Activated B cell treated with CpG ODN at 0.5 μM for 24 hours (primary cell): ENCODE measurements at regions of chr4 and their contacts with region 1.

Region 1: GRCh38 chr4:112938461-112939058 is 110.9 kb upstream of the ANK2 start:
- DNase-seq: no peak
- ATAC-seq: no peak
- H3K4me3 Mint-ChIP-seq: no peak overlapping the region
- H3K27ac Mint-ChIP-seq: no peak overlapping the region
- H3K4me1 Mint-ChIP-seq: no peaks in the 10 kb centered on the region
- H3K27me3 Mint-ChIP-seq: peaks cover 4% of the 10 kb centered on the region
- CTCF ChIP-seq: no peak

Region 2: GRCh38 chr4:112765317-112765975 is 173.1 kb before region 1 on chr4:
- CTCF ChIA-PET with region 1: interaction called, 10 read pairs
- POLR2A ChIA-PET with region 1: no interaction called
- intact Hi-C with region 1: loop called (anchors 1 kb)
- DNase-seq: no peak
- ATAC-seq: peak; percentile 54
- H3K4me3 Mint-ChIP-seq: no peak overlapping the region
- H3K27ac Mint-ChIP-seq: no peak overlapping the region
- H3K4me1 Mint-ChIP-seq: peaks cover 3% of the 10 kb centered on the region
- H3K27me3 Mint-ChIP-seq: peaks cover 4% of the 10 kb centered on the region
- CTCF ChIP-seq: no peak

Region 3: GRCh38 chr4:112817933-112818593 is 120.5 kb before region 1 on chr4:
- CTCF ChIA-PET with region 1: no interaction called
- POLR2A ChIA-PET with region 1: no interaction called
- intact Hi-C with region 1: no loop called
- DNase-seq: peak; percentile 30
- ATAC-seq: peak; percentile 94
- H3K4me3 Mint-ChIP-seq: peak overlapping the region; percentile 88
- H3K27ac Mint-ChIP-seq: peak overlapping the region; percentile 83
- H3K4me1 Mint-ChIP-seq: peaks cover 15% of the 10 kb centered on the region
- H3K27me3 Mint-ChIP-seq: peaks cover 9% of the 10 kb centered on the region
- CTCF ChIP-seq: no peak

Region 4: GRCh38 chr4:112853662-112854256 is 84.8 kb before region 1 on chr4:
- CTCF ChIA-PET with region 1: no interaction called
- POLR2A ChIA-PET with region 1: no interaction called
- intact Hi-C with region 1: loop called (anchors 2 kb)
- DNase-seq: no peak
- ATAC-seq: no peak
- H3K4me3 Mint-ChIP-seq: no peak overlapping the region
- H3K27ac Mint-ChIP-seq: no peak overlapping the region
- H3K4me1 Mint-ChIP-seq: no peaks in the 10 kb centered on the region
- H3K27me3 Mint-ChIP-seq: no peaks in the 10 kb centered on the region
- CTCF ChIP-seq: no peak

Region 5: DNA sequence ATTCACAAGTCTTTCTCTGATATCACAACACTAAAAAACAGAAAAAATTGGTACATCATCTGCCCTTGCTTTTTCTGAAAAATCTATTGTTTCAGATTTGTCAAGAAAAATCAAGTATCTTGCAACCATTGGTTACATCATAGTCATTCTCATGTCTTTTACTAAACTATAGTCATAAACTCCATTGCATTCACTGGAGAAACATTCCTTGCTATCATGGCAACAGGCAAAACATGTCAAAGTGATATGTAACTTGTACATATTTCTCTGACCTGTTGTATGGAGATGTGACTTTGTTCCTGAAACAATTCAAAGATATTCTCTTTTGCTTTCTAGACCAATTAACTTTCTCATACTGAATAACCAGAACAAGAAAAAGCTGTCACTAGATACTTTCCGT is 11.0 kb before region 1 on chr4:
- CTCF ChIA-PET with region 1: interaction called, 11 read pairs
- POLR2A ChIA-PET with region 1: no interaction called
- intact Hi-C with region 1: no loop called
- DNase-seq: no peak
- ATAC-seq: no peak
- H3K4me3 Mint-ChIP-seq: no peak overlapping the region
- H3K27ac Mint-ChIP-seq: no peak overlapping the region
- H3K4me1 Mint-ChIP-seq: no peaks in the 10 kb centered on the region
- H3K27me3 Mint-ChIP-seq: no peaks in the 10 kb centered on the region
- CTCF ChIP-seq: no peak

Region 6: GRCh38 chr4:112951362-112952312 is 13.1 kb after region 1 on chr4:
- CTCF ChIA-PET with region 1: interaction called, 13 read pairs
- POLR2A ChIA-PET with region 1: no interaction called
- intact Hi-C with region 1: no loop called
- DNase-seq: no peak
- ATAC-seq: no peak
- H3K4me3 Mint-ChIP-seq: no peak overlapping the region
- H3K27ac Mint-ChIP-seq: no peak overlapping the region
- H3K4me1 Mint-ChIP-seq: peaks cover 2% of the 10 kb centered on the region
- H3K27me3 Mint-ChIP-seq: peaks cover 3% of the 10 kb centered on the region
- CTCF ChIP-seq: no peak

Region 7: DNA sequence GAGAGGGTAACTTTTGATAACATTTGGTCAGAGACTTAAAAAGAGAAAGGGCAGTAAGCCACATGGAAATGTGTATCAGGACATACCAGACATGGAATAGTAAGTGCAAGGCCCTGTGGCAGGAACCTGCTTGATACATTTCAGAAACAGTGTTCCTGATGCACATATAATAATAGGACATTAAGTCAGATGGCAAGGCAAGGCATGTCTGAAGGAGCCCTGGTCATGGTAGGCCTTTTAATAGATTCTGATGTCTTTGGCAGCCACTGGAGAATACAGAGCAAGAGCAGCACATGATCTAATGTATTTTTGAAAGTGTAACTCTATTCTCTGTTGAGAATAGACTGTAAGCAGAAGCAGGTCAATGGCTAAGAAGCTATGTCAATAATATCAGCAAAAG is 543.3 kb after region 1 on chr4:
- CTCF ChIA-PET with region 1: no interaction called
- POLR2A ChIA-PET with region 1: no interaction called
- intact Hi-C with region 1: no loop called
- DNase-seq: no peak
- ATAC-seq: no peak
- H3K4me3 Mint-ChIP-seq: no peak overlapping the region
- H3K27ac Mint-ChIP-seq: peak overlapping the region; percentile 9
- H3K4me1 Mint-ChIP-seq: peaks cover 1% of the 10 kb centered on the region
- H3K27me3 Mint-ChIP-seq: no peaks in the 10 kb centered on the region
- CTCF ChIP-seq: no peak